ENCODE measurements at regions of chr2 and their contacts with region 1.

Region 1: GRCh38 chr2:222410534-222410933 is 13.8 kb upstream of the SGPP2 start:
- DNase-seq: no peak
- H3K4me3 ChIP-seq: no peak overlapping the region
- H3K27me3 ChIP-seq: no peaks in the 10 kb centered on the region
- CTCF ChIP-seq: no peak

Region 2: GRCh38 chr2:222341331-222341730 is 69.2 kb before region 1 on chr2:
- CTCF ChIA-PET with region 1: no interaction called
- POLR2A ChIA-PET with region 1: no interaction called
- DNase-seq: no peak
- H3K4me3 ChIP-seq: no peak overlapping the region
- H3K27me3 ChIP-seq: no peaks in the 10 kb centered on the region
- CTCF ChIP-seq: no peak

Region 3: GRCh38 chr2:222375798-222376197 is 34.7 kb before region 1 on chr2:
- CTCF ChIA-PET with region 1: no interaction called
- POLR2A ChIA-PET with region 1: interaction called, 15 read pairs
- DNase-seq: no peak
- H3K4me3 ChIP-seq: no peak overlapping the region
- H3K27me3 ChIP-seq: no peaks in the 10 kb centered on the region
- CTCF ChIP-seq: no peak

Region 4: DNA sequence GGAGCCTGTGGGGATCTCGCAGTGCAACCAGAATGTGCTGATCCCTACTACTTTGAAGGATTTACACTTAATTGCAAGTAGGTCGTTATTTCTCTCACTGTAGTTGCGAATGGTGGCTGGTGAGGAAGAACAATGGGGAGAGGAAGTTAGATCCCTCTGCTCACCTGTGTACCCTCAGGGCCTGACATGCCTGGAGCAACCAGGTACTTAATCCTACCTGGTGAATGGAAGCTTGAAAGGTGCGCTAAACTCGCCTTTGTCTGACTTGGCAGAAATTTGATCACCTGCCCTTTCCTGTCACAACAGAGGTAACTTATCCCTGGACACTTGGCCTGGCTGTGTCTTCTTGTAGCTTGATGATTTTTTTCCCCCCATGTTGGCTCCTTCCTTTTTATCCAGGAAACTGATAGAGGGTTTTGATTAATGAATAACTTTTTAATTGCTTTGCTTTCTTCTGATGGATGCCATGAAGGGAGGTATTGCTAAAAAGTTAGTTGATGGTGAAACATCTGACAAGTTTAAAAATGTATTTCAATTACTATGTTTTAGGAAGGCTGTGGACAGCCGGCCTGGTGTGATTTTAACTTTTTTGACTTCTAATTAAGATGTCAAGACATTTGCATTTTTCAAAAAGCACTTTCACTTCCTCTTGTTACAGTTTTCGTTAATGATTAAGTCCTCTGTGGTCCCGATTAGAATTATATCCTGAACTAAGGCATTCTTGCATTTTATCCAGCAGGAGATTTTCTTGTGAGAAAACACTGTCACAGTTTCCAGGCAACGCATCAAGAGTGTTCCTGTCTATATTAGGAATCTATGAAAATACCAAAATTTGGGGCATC is 23.0 kb after region 1 on chr2:
- CTCF ChIA-PET with region 1: no interaction called
- POLR2A ChIA-PET with region 1: no interaction called
- DNase-seq: no peak
- H3K4me3 ChIP-seq: no peak overlapping the region
- H3K27me3 ChIP-seq: no peaks in the 10 kb centered on the region
- CTCF ChIP-seq: no peak

Region 5: DNA sequence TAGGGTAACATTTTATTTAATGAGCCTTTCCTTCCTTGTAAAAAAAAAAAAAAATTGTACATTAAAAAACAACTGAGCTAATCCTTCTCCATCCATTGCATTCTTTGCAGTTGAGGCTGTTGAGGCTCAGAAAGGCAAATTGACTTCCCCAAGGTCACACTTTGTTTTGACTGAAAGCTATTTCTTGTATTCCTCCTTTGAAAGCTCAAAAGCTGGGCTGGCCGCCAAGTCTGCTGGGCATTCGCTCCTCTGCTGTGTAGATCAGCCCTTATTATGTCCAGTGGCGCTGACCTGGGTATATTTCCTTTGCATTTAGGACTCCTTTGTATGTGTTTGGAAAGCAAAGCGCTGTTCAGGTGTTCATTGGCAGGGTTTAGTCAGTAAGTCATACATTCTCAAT is 57.8 kb after region 1 on chr2:
- CTCF ChIA-PET with region 1: no interaction called
- POLR2A ChIA-PET with region 1: no interaction called
- DNase-seq: no peak
- H3K4me3 ChIP-seq: no peak overlapping the region
- H3K27me3 ChIP-seq: peaks cover 1% of the 10 kb centered on the region; the same call in 1 of the 2 replicates
- CTCF ChIP-seq: no peak

Region 6: GRCh38 chr2:222483513-222484039 is 73.0 kb after region 1 on chr2:
- CTCF ChIA-PET with region 1: no interaction called
- POLR2A ChIA-PET with region 1: no interaction called
- DNase-seq: no peak
- H3K4me3 ChIP-seq: no peak overlapping the region
- H3K27me3 ChIP-seq: no peaks in the 10 kb centered on the region
- CTCF ChIP-seq: no peak